ENCODE measurements at regions of chr1 and their contacts with region 1.

Region 1: GRCh38 chr1:38834937-38835827 is 24.4 kb downstream of the RRAGC start:
- DNase-seq: no peak
- H3K4me3 ChIP-seq: no peak overlapping the region
- H3K27ac ChIP-seq: no peak overlapping the region
- H3K4me1 ChIP-seq: peaks cover 0 to 2% (median 0%) of the 10 kb centered on the region in 4 experiments; a peak in 3 of 7 replicates
- H3K27me3 ChIP-seq: no peaks in the 10 kb centered on the region
- CTCF ChIP-seq: peak; percentile 21 to 91 (median 78)
- EP300 ChIP-seq: no peak
- POLR2A ChIP-seq: no peak
- RAD21 ChIP-seq: peak; percentile 94 to 96

Region 2: DNA sequence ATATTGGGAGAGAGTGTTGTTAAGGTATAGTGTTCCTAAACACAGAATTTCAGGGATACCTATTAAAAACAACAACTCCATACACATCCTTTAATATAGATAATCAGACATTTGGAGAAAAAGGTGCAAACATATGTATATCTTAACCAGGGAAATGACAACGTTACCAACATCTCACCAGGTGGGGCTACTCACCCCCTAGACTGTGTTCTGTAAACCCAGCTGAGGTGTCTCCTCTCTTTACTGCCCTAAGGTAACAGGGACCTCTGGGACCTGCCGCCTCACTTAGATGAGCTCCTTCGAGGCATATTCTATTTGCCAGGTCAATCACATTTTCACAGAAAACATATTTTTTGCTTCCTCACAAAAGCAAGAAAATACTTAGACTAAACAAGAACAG is 11.0 kb after region 1 on chr1:
- CTCF ChIA-PET with region 1: interaction called, 16 read pairs
- POLR2A ChIA-PET with region 1: interaction called, 3 read pairs
- DNase-seq: no peak
- H3K4me3 ChIP-seq: no peak overlapping the region
- H3K27ac ChIP-seq: no peak overlapping the region
- H3K4me1 ChIP-seq: no peaks in the 10 kb centered on the region
- H3K27me3 ChIP-seq: no peaks in the 10 kb centered on the region
- CTCF ChIP-seq: no peak; a peak in 1 of 4 replicates
- EP300 ChIP-seq: no peak
- POLR2A ChIP-seq: no peak
- RAD21 ChIP-seq: peak; percentile 22 to 40; a peak in 3 of 4 replicates

Region 3: DNA sequence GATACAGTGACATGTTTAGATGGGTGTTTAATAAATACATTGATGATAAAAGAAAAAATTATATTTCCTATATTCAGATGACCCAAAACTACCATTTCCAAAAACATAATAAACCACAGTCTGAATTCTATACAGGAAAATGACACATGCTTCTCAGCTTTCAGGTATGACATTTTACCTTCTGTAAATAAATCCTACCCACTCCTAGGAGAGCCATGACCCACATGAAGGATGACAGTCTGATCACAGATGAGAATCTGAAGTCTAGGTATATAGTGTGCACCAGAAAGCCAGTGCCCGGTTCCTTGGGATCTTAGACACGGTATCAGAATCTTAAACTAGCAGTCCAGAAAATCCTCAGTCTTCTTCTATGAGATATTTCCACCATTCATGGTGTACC is 49.9 kb after region 1 on chr1:
- CTCF ChIA-PET with region 1: no interaction called
- POLR2A ChIA-PET with region 1: no interaction called
- DNase-seq: no peak
- H3K4me3 ChIP-seq: no peak overlapping the region
- H3K27ac ChIP-seq: no peak overlapping the region
- H3K4me1 ChIP-seq: no peaks in the 10 kb centered on the region
- H3K27me3 ChIP-seq: no peaks in the 10 kb centered on the region; a peak in 1 of 7 replicates
- CTCF ChIP-seq: no peak
- EP300 ChIP-seq: no peak
- POLR2A ChIP-seq: no peak
- RAD21 ChIP-seq: no peak

Measured in H1 (cell line).